ENCODE measurements at regions of chr3 and their contacts with region 1.

Region 1: DNA sequence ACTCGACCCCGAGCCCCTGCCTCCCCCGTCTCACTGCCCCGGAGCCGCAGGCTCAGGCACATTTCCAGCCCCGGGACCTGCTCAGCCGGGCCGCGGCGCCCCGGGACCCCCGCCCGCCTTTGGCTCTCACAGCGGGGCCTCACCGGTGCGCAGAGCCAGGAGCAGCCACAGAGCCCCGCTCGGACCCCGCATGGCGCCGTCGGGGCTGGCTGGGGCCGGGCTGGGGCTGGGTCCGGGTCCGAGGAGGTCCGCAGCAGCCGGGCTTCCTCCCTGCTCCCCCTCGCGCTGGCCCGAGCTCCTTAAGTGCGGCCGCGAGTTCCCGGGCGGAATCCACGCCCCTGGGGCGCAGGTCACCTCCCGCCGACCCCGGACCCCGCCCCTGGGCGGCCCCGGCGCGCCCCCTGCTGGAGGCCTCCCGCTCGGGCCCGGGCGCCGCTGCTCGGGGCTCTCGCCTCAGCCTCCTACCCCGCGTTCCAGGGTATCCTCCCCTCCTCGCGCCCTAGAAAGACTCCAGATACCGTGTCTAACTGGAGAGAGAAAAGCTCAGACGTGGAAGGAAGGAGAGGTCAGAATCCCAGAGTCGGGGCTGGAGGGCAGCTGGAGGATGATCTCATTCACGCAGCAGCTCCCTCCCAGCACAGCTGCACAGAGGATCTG is at the start of gene MELTF:
- DNase-seq: peak; percentile 65
- H3K4me3 Mint-ChIP-seq: peak within 1 kb of the TSS; percentile 78
- H3K27ac Mint-ChIP-seq: no peak within 1 kb of the TSS
- H3K4me1 Mint-ChIP-seq: peaks cover 9% of the 10 kb centered on the region
- H3K27me3 Mint-ChIP-seq: peaks cover 6% of the 10 kb centered on the region
- total RNA-seq, gene MELTF: 5.1 to 5.5 TPM

Region 2: GRCh38 chr3:196837819-196838420 is 191.7 kb before region 1 on chr3:
- CTCF ChIA-PET with region 1: interaction called, 5 read pairs
- intact Hi-C with region 1: loop called (anchors 1 kb)
- DNase-seq: peak; percentile 90
- H3K4me3 Mint-ChIP-seq: no peak overlapping the region
- H3K27ac Mint-ChIP-seq: no peak overlapping the region
- H3K4me1 Mint-ChIP-seq: no peaks in the 10 kb centered on the region
- H3K27me3 Mint-ChIP-seq: no peaks in the 10 kb centered on the region

Region 3: DNA sequence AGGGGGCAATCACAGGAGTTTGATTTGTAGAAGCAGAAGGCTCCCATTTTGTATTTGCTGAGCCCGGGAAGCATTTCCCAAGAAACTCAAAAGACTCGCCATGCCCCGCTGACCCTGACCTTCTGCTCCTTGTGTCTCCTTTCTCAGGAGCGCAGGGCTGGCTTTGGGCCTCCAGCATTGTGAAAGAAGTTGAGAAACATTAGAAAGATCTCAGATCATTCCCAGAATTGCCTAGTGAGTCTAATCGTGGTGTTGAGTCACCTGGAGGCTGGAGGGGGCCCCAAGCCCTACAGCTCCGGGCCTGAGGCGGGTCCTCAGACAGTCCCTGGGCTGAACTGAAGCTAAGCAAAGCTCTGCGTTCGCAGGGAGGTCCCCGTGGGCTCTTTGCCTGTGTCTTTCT is 50.1 kb before region 1 on chr3:
- CTCF ChIA-PET with region 1: interaction called, 7 read pairs
- intact Hi-C with region 1: loop called (anchors 1 kb)
- DNase-seq: no peak
- H3K4me3 Mint-ChIP-seq: no peak overlapping the region
- H3K27ac Mint-ChIP-seq: no peak overlapping the region
- H3K4me1 Mint-ChIP-seq: peaks cover 6% of the 10 kb centered on the region
- H3K27me3 Mint-ChIP-seq: peaks cover 7% of the 10 kb centered on the region

Region 4: GRCh38 chr3:197002701-197003454 is 26.8 kb before region 1 on chr3:
- CTCF ChIA-PET with region 1: interaction called, 17 read pairs
- intact Hi-C with region 1: loop called (anchors 1 kb)
- DNase-seq: peak; percentile 92
- H3K4me3 Mint-ChIP-seq: no peak overlapping the region
- H3K27ac Mint-ChIP-seq: no peak overlapping the region
- H3K4me1 Mint-ChIP-seq: peaks cover 8% of the 10 kb centered on the region
- H3K27me3 Mint-ChIP-seq: no peaks in the 10 kb centered on the region

Region 5: GRCh38 chr3:197019021-197019420 is 10.6 kb before region 1 on chr3:
- CTCF ChIA-PET with region 1: interaction called, 14 read pairs
- intact Hi-C with region 1: no loop called
- DNase-seq: no peak
- H3K4me3 Mint-ChIP-seq: no peak overlapping the region
- H3K27ac Mint-ChIP-seq: no peak overlapping the region
- H3K4me1 Mint-ChIP-seq: peaks cover 9% of the 10 kb centered on the region
- H3K27me3 Mint-ChIP-seq: peaks cover 5% of the 10 kb centered on the region

Region 6: GRCh38 chr3:197041875-197042488 is 12.3 kb after region 1 on chr3:
- CTCF ChIA-PET with region 1: interaction called, 14 read pairs
- intact Hi-C with region 1: no loop called
- DNase-seq: no peak
- H3K4me3 Mint-ChIP-seq: no peak overlapping the region
- H3K27ac Mint-ChIP-seq: no peak overlapping the region
- H3K4me1 Mint-ChIP-seq: no peaks in the 10 kb centered on the region
- H3K27me3 Mint-ChIP-seq: no peaks in the 10 kb centered on the region

Region 7: GRCh38 chr3:197050511-197050910 is 20.9 kb after region 1 on chr3:
- CTCF ChIA-PET with region 1: interaction called, 13 read pairs
- intact Hi-C with region 1: no loop called
- DNase-seq: no peak
- H3K4me3 Mint-ChIP-seq: no peak overlapping the region
- H3K27ac Mint-ChIP-seq: no peak overlapping the region
- H3K4me1 Mint-ChIP-seq: peaks cover 16% of the 10 kb centered on the region
- H3K27me3 Mint-ChIP-seq: no peaks in the 10 kb centered on the region